ENCODE measurements at regions of chr16 and their contacts with region 1.

Region 1: DNA sequence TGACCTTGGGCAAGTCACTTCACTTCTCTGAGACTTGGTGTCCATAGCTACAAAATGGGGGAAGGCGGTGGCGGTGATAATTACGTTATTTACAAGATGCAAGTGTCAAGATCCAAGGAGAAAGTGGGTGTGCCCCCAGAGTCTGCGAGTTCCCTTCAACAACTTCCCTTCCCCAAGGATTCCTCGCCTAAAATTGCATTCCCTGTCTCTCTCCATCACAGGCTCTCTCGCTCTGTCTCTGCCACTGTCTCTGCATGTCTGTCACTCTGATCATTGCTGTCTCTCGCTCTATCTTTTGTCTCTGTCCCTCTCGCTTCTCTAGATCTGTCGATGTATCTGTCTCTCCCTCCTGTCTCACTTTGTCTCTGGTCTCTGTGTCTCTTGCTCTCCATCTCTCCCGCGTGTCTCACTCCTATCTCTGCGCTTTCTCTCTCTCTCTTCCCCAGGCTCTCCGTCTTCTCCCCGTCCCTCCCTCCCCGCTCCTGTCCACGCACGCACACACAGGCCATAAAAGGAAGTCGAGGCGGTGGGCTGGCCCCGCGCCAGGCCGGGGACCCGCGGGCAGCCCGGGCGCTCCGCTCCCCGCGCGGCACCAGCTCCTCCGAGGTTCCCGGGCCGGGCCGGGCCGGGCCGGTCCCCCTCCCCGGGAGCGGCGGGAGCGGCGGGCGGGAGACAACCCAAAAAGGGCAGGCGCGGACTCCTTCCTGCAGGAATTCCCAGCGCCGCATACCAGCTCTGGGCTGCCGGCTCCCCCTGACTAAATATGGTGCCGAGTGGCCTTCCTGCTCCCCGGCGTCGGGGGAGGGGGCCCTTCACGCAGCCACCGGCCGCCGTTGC is 1.1 kb upstream of the MYH11 start:
- DNase-seq: no peak
- H3K4me3 ChIP-seq: peak overlapping the region; percentile 73
- H3K27ac ChIP-seq: no peak overlapping the region
- H3K4me1 ChIP-seq: peaks cover 54% of the 10 kb centered on the region
- CTCF ChIP-seq: no peak

Region 2: DNA sequence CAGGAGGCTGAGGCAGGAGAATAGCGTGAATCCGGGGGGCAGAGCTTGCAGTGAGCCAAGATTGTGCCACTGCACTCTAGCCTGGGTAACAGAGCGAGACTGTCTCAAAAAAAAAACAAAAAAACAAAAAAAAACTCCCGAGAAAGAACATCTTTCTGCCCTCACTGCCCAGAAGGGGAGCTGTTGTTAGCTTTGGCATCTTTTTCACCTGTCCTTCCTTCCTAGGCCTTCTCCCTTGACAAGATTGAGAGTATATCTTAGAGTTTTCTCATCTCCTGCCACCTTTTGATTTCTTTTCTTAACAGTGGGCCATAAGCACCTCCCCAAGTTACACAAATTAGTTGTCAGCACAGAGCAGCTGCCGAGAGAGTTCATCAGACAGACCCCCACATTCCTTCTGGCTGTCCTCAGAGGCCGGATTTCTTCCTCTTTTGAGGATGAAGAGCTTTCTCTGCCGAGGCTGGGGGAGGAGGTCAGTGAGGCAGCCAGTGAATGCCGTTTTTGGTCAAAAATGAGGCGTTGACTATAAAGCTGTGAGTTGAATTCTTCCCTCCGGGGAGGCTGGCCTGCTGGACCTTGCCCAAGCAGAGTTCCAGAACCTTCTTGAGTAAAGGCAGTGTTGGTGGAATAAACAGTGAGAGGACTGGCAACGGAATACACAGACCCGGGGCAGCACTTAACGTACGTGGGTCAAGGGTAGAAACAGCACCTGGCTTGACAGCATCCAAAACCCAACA is 238.3 kb after region 1 on chr16:
- CTCF ChIA-PET with region 1: no interaction called
- POLR2A ChIA-PET with region 1: no interaction called
- intact Hi-C with region 1: loop called (anchors 2 kb)
- DNase-seq: peak; percentile 82
- H3K4me3 ChIP-seq: peak overlapping the region; percentile 28
- H3K27ac ChIP-seq: peak overlapping the region; percentile 100
- H3K4me1 ChIP-seq: peaks cover 66% of the 10 kb centered on the region
- CTCF ChIP-seq: peak; percentile 78

Region 3: GRCh38 chr16:16105646-16106045 is 247.7 kb after region 1 on chr16:
- CTCF ChIA-PET with region 1: interaction called, 9 read pairs
- POLR2A ChIA-PET with region 1: interaction called, 3 read pairs
- intact Hi-C with region 1: loop called (anchors 2 kb)
- DNase-seq: peak; percentile 90
- H3K4me3 ChIP-seq: peak overlapping the region; percentile 53
- H3K27ac ChIP-seq: peak overlapping the region; percentile 100
- H3K4me1 ChIP-seq: peaks cover 84% of the 10 kb centered on the region
- CTCF ChIP-seq: no peak